ENCODE measurements at regions of chr9 and their contacts with region 1.

Region 1: GRCh38 chr9:88593537-88594185 is 58.7 kb downstream of the NXNL2 start:
- DNase-seq: no peak
- ATAC-seq: peak; percentile 76 to 78
- H3K4me3 ChIP-seq: no peak overlapping the region
- H3K27ac ChIP-seq: no peak overlapping the region
- H3K4me1 ChIP-seq: no peaks in the 10 kb centered on the region
- H3K27me3 ChIP-seq: peaks cover 4% of the 10 kb centered on the region
- CTCF ChIP-seq: peak; percentile 67

Region 2: GRCh38 chr9:88991066-88992034 is 397.7 kb after region 1 on chr9 and contains the start of gene S1PR3:
- intact Hi-C with region 1: loop called (anchors 10 kb)
- DNase-seq: peak; percentile 63
- ATAC-seq: peak; percentile 78 to 87
- H3K4me3 ChIP-seq: peak within 1 kb of the TSS; percentile 66
- H3K27ac ChIP-seq: peak within 1 kb of the TSS; percentile 62
- H3K4me1 ChIP-seq: peaks cover 33% of the 10 kb centered on the region
- H3K27me3 ChIP-seq: peaks cover 11% of the 10 kb centered on the region
- CTCF ChIP-seq: no peak
- total RNA-seq, gene S1PR3: 10.0 TPM